ENCODE measurements at regions of chr12 and their contacts with region 1.

Region 1: GRCh38 chr12:75666939-75667334 is 155.5 kb upstream of the KRR1 start:
- DNase-seq: peak; percentile 75
- ATAC-seq: peak; percentile 77
- H3K4me3 ChIP-seq: peak overlapping the region; percentile 15 to 57 (median 50); a peak in 3 of 6 replicates
- H3K27ac ChIP-seq: peak overlapping the region; percentile 99
- H3K4me1 ChIP-seq: peaks cover 44% of the 10 kb centered on the region
- H3K27me3 ChIP-seq: no peaks in the 10 kb centered on the region
- CTCF ChIP-seq: no peak
- EP300 ChIP-seq: 0 out of 4 replicates have a peak, but pooled peaks of 1 of the 2 experiments have one; percentile 10
- POLR2A ChIP-seq: no peak
- RAD21 ChIP-seq: no peak

Region 2: DNA sequence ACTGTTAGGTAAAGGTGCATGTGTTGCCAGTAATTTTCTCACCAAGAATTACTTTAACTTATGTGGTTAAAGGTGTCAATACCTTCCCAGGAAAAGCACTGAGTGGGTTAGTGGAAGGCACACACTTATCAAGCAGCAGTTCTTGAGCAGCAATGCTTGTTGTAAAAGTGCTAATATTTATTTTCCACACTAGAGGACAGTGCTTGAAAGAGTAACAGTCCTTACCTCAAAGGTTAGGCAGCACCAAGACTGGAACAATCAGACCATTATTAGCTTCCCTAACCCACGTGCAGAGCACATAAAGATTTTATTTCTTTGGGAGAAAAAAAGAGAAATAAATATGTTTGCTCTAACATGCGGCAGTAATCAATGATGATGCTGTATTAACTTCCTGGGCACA is 106.8 kb before region 1 on chr12:
- CTCF ChIA-PET with region 1: no interaction called
- POLR2A ChIA-PET with region 1: interaction called, 4 read pairs
- in situ Hi-C with region 1: no loop called
- intact Hi-C with region 1: loop called (anchors 2 kb)
- DNase-seq: peak; percentile 68
- ATAC-seq: peak; percentile 87
- H3K4me3 ChIP-seq: no peak overlapping the region
- H3K27ac ChIP-seq: no peak overlapping the region
- H3K4me1 ChIP-seq: peaks cover 55% of the 10 kb centered on the region
- H3K27me3 ChIP-seq: no peaks in the 10 kb centered on the region
- CTCF ChIP-seq: peak; percentile 83
- EP300 ChIP-seq: no peak
- POLR2A ChIP-seq: no peak
- RAD21 ChIP-seq: peak; percentile 58; the same call in 1 of the 2 replicates

Region 3: GRCh38 chr12:75628916-75629315 is 38.0 kb before region 1 on chr12:
- CTCF ChIA-PET with region 1: no interaction called
- POLR2A ChIA-PET with region 1: interaction called, 15 read pairs
- in situ Hi-C with region 1: no loop called
- intact Hi-C with region 1: loop called (anchors 5 kb)
- DNase-seq: peak; percentile 77
- ATAC-seq: peak; percentile 78
- H3K4me3 ChIP-seq: no peak overlapping the region
- H3K27ac ChIP-seq: peak overlapping the region; percentile 52
- H3K4me1 ChIP-seq: peaks cover 43% of the 10 kb centered on the region
- H3K27me3 ChIP-seq: no peaks in the 10 kb centered on the region
- CTCF ChIP-seq: no peak
- EP300 ChIP-seq: peak in 1 of 2 experiments; percentile 70; a peak in 2 of 4 replicates
- POLR2A ChIP-seq: no peak
- RAD21 ChIP-seq: no peak

Region 4: GRCh38 chr12:75712252-75712651 is 45.3 kb after region 1 on chr12:
- CTCF ChIA-PET with region 1: no interaction called
- POLR2A ChIA-PET with region 1: interaction called, 9 read pairs
- in situ Hi-C with region 1: no loop called
- intact Hi-C with region 1: loop called (anchors 2 kb)
- DNase-seq: peak; percentile 95
- ATAC-seq: peak; percentile 70
- H3K4me3 ChIP-seq: no peak overlapping the region
- H3K27ac ChIP-seq: no peak overlapping the region
- H3K4me1 ChIP-seq: peaks cover 93% of the 10 kb centered on the region
- H3K27me3 ChIP-seq: no peaks in the 10 kb centered on the region
- CTCF ChIP-seq: no peak
- EP300 ChIP-seq: peak in 1 of 2 experiments; percentile 90; a peak in 2 of 4 replicates
- POLR2A ChIP-seq: no peak
- RAD21 ChIP-seq: no peak

Region 5: DNA sequence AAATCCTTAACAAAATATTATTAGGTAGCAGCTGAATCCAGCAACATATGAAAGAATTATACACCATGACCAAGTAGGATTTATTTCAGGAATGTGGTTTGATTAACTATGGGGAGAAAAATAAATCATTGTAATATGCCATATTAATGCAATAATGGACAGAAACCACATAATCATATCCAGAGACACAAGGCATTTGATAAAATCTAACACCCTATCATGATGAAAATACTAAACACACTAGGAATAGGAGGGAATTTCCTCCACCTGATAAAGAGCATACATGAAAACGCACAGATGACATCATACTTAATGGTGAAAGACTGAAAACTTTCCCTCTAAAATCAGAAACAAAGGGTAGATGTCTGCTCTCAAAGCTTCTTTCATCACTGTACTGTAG is 125.8 kb after region 1 on chr12:
- CTCF ChIA-PET with region 1: no interaction called
- POLR2A ChIA-PET with region 1: no interaction called
- in situ Hi-C with region 1: no loop called
- intact Hi-C with region 1: no loop called
- DNase-seq: no peak
- ATAC-seq: no peak
- H3K4me3 ChIP-seq: no peak overlapping the region
- H3K27ac ChIP-seq: no peak overlapping the region
- H3K4me1 ChIP-seq: peaks cover 3% of the 10 kb centered on the region
- H3K27me3 ChIP-seq: no peaks in the 10 kb centered on the region
- CTCF ChIP-seq: no peak
- EP300 ChIP-seq: no peak
- POLR2A ChIP-seq: no peak
- RAD21 ChIP-seq: no peak

Region 6: DNA sequence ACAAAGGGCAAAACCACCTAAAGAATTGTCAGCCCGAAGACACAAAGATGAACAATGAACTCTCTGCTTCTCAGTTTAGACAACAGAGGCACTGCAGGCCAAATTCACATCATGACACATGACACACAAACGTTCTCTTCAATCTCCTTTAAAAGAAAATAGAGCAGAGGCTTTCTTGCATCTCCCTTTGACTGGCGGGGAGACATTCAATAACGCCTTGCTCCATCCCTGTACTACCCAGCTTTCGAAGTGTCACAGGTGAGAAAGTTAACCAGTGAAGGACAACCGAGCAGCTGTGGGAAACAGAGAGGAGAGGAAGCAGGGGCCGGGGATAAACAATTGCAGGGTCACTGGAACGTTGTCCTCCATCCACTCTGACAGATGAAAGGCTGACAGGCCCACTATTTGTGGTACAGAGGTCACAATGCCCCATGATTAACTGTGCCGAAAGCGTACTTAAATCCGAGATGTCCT is 233.9 kb after region 1 on chr12:
- CTCF ChIA-PET with region 1: no interaction called
- POLR2A ChIA-PET with region 1: no interaction called
- in situ Hi-C with region 1: no loop called
- intact Hi-C with region 1: loop called (anchors 1 kb)
- DNase-seq: peak; percentile 94
- ATAC-seq: peak; percentile 100
- H3K4me3 ChIP-seq: peak overlapping the region in 2 of 3 experiments; percentile 1 to 37; a peak in 2 of 6 replicates
- H3K27ac ChIP-seq: peak overlapping the region; percentile 69
- H3K4me1 ChIP-seq: peaks cover 39% of the 10 kb centered on the region
- H3K27me3 ChIP-seq: no peaks in the 10 kb centered on the region
- CTCF ChIP-seq: no peak
- EP300 ChIP-seq: peak; percentile 10 to 90; a peak in 2 of 4 replicates
- POLR2A ChIP-seq: no peak
- RAD21 ChIP-seq: peak; percentile 29; the same call in 1 of the 2 replicates

Region 7: GRCh38 chr12:75977952-75978671 is 311.2 kb after region 1 on chr12:
- CTCF ChIA-PET with region 1: no interaction called
- POLR2A ChIA-PET with region 1: interaction called, 11 read pairs
- in situ Hi-C with region 1: no loop called
- intact Hi-C with region 1: loop called (anchors 1 kb)
- DNase-seq: peak; percentile 100
- ATAC-seq: peak; percentile 94
- H3K4me3 ChIP-seq: peak overlapping the region; percentile 7 to 51 (median 15); a peak in 3 of 6 replicates
- H3K27ac ChIP-seq: peak overlapping the region; percentile 91
- H3K4me1 ChIP-seq: peaks cover 85% of the 10 kb centered on the region
- H3K27me3 ChIP-seq: no peaks in the 10 kb centered on the region
- CTCF ChIP-seq: no peak
- EP300 ChIP-seq: peak; percentile 96 to 98
- POLR2A ChIP-seq: peak in 1 of 2 experiments; percentile 41; a peak in 3 of 4 replicates
- RAD21 ChIP-seq: peak; percentile 67; the same call in 1 of the 2 replicates

Measured in HepG2 (cell line).